Activated naive CD8-positive, alpha-beta T cell treated with anti-CD3 and anti-CD28 coated beads, Interleukin-2, amount 10 ng/mL, durations not matched to agents 7 days and 5 days (primary cell): ENCODE measurements at regions of chr1 and their contacts with region 1.

Region 1: GRCh38 chr1:166910396-166910994 is 34.4 kb upstream of the TADA1 start:
- DNase-seq: peak; percentile 50
- ATAC-seq: peak; percentile 83
- H3K4me3 Mint-ChIP-seq: no peak overlapping the region
- H3K27ac Mint-ChIP-seq: no peak overlapping the region
- H3K4me1 Mint-ChIP-seq: peaks cover 28% of the 10 kb centered on the region
- H3K27me3 Mint-ChIP-seq: peaks cover 2% of the 10 kb centered on the region

Region 2: DNA sequence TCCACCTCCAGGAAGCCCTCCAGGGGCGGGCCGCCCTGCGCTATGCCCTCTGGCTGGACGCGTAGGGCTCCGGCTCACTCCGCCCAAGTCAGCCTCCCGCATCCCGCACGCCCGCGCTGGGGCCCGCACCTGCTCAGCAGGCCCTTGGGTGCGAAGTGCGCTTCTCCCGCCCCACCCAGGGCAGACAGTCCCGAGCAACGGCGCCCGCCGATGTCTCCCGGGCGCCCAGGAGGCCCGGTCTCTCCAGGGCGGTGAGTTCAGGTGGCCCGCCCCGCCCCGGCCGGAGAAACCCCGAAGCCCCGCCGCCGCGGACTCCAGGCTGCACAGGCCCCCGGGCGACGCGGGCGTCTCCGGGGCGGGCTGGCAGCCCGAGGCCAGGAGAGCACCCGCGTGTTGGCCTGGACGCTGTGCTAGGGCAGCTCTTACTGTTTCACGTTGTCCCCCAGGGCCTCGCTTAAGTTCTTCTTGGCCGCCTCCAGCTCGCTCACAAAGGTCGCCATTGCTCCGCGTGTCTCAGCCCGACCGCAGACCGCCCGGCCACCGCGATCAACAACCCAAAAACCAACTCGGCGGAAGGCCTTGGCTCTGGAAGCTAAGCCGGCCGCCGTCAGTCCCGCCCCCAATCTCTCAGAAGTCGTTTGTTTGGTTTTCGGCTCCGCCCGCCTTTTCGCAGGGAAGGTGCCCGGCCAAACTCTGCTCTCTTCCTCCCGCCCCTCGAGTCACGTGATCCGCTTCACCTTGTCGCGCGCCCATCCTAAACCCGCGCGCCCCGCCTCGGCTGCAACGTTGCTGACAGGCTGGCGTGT is 34.6 kb before region 1 on chr1 and contains the start of gene TADA1:
- POLR2A ChIA-PET with region 1: interaction called, 19 read pairs
- DNase-seq: peak; percentile 98
- ATAC-seq: peak; percentile 88
- H3K4me3 Mint-ChIP-seq: peak within 1 kb of the TSS; percentile 99
- H3K27ac Mint-ChIP-seq: peak within 1 kb of the TSS; percentile 99
- H3K4me1 Mint-ChIP-seq: peaks cover 31% of the 10 kb centered on the region
- H3K27me3 Mint-ChIP-seq: peaks cover 4% of the 10 kb centered on the region
- total RNA-seq, gene TADA1: 14.4 to 15.3 TPM

Region 3: GRCh38 chr1:166924823-166925541 is 14.5 kb after region 1 on chr1:
- POLR2A ChIA-PET with region 1: no interaction called
- DNase-seq: no peak
- ATAC-seq: no peak
- H3K4me3 Mint-ChIP-seq: no peak overlapping the region
- H3K27ac Mint-ChIP-seq: no peak overlapping the region
- H3K4me1 Mint-ChIP-seq: peaks cover 1% of the 10 kb centered on the region
- H3K27me3 Mint-ChIP-seq: peaks cover 20% of the 10 kb centered on the region

Region 4: GRCh38 chr1:166937329-166937728 is 26.8 kb after region 1 on chr1:
- POLR2A ChIA-PET with region 1: no interaction called
- DNase-seq: no peak
- ATAC-seq: no peak
- H3K4me3 Mint-ChIP-seq: no peak overlapping the region
- H3K27ac Mint-ChIP-seq: no peak overlapping the region
- H3K4me1 Mint-ChIP-seq: peaks cover 9% of the 10 kb centered on the region
- H3K27me3 Mint-ChIP-seq: peaks cover 2% of the 10 kb centered on the region

Region 5: DNA sequence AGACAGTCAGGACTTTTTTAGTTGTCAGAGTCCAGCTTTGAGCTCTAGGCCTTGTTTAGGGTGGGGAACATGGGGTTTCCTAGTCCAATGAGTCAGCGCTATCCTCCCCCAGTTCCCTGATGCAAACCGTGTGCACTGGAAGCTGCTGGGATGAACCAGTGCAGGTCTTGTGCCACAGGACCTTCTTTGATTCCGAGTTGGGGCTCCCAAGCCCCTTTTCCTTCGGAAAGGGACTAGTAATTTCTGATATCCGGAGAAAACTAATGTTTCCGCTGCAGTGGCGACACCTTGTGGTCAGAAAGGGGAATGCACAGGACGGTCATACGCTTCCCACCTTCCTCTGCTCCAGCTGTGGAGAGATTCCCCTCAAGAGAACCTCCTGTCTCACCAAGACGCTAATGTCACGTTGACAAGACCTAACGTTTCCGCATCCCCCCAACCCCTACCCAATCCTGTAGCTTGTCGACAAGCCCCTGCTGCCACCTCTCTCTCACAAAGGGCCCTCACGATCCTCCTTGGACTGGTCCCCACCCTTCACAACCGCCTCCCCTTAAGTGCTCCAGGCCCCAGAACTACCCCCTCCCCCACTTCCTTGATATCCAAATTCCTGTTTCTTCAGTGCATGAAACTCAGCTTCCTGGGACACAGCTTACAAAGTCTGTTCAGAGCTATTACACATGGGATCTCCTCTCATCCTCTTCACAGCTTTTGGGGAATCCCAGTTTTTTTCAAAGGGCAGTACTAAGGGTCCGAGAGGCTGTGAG is 148.7 kb after region 1 on chr1:
- POLR2A ChIA-PET with region 1: interaction called, 22 read pairs
- DNase-seq: peak; percentile 75
- ATAC-seq: peak; percentile 21
- H3K4me3 Mint-ChIP-seq: peak overlapping the region; percentile 8
- H3K27ac Mint-ChIP-seq: peak overlapping the region; percentile 43
- H3K4me1 Mint-ChIP-seq: peaks cover 14% of the 10 kb centered on the region
- H3K27me3 Mint-ChIP-seq: no peaks in the 10 kb centered on the region